H1 (cell line): ENCODE measurements at regions of chr2 and their contacts with region 1.

Region 1: GRCh38 chr2:239959059-239959971 is 65.8 kb downstream of the NDUFA10 start:
- DNase-seq: no peak
- H3K4me3 ChIP-seq: no peak overlapping the region
- H3K27ac ChIP-seq: no peak overlapping the region
- H3K4me1 ChIP-seq: no peaks in the 10 kb centered on the region
- H3K27me3 ChIP-seq: no peaks in the 10 kb centered on the region
- CTCF ChIP-seq: no peak
- EP300 ChIP-seq: no peak
- POLR2A ChIP-seq: no peak
- RAD21 ChIP-seq: no peak

Region 2: DNA sequence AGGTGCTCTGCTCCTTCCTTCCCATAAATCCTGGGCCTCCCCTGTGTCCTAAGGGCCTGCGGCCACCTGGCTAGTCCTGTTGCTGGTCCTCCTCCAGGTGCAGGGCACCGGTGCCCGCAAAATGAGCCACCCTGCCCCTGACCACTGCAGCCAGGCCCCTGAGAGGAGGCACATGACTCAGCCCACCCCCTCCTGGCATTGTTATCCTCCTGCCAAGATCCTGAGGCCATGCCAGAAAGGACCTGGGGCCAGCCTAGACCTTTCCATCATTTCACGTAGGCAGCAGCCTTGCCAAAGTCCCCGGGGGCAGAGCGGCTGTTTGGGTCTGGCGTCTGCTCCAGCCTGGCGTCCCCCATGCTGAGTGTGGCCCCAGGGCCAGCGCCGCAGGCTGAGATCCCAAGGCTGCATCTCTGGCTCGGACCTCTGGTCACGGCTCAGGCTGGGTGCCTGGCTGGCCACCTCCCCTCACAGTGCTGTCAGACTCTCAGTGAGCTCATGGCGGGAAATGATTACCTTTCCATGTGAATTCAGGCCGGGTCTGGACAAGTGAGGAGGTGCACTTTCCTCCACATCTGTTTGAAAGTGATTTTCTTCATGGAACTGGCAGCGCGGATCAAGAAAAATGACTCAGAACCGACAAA is 15.2 kb before region 1 on chr2:
- CTCF ChIA-PET with region 1: no interaction called
- POLR2A ChIA-PET with region 1: no interaction called
- DNase-seq: no peak
- H3K4me3 ChIP-seq: no peak overlapping the region
- H3K27ac ChIP-seq: no peak overlapping the region
- H3K4me1 ChIP-seq: no peaks in the 10 kb centered on the region
- H3K27me3 ChIP-seq: no peaks in the 10 kb centered on the region
- CTCF ChIP-seq: no peak
- EP300 ChIP-seq: no peak
- POLR2A ChIP-seq: no peak
- RAD21 ChIP-seq: no peak

Region 3: DNA sequence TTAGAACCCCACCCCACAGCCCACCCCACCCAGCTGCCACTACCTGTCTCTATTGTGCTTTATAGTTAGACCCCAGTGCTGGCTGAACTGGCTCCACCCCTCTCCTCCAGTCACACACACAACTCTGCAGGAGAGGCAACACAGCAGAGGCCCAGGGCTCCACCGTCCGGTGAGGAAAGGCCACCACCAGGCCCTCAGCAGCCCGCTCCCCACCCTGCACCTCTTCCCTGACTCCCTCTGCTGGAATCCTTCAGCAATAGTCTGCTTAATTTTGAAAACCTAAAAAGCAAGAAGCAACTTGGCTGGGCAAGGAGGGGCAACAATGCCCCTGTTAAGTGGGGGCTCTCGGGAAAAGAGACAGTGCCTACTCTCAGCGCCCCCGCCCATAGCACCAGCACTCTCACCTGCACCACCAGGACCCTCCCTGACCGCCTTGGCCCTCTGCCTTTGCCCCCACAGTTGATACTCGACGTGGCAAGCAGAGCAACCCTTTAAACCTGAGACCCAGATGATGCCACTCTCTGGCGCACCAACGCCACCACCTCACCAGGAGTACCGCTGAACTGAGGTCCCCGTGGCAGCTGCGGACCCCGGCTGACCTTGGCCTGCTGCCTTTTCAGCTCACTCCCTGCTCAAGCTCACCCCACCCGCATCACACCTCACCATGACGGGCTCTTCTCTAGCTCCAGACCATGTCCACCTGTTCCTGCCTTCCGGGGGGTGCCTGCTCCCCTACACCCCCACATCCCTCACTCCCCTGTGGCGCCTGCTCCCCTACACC is 20.1 kb after region 1 on chr2:
- CTCF ChIA-PET with region 1: interaction called, 41 read pairs
- POLR2A ChIA-PET with region 1: no interaction called
- DNase-seq: peak; percentile 19 to 68
- H3K4me3 ChIP-seq: no peak overlapping the region
- H3K27ac ChIP-seq: no peak overlapping the region; the same call in 1 of the 2 replicates
- H3K4me1 ChIP-seq: no peaks in the 10 kb centered on the region; a peak in 1 of 7 replicates
- H3K27me3 ChIP-seq: no peaks in the 10 kb centered on the region
- CTCF ChIP-seq: peak; percentile 71 to 97 (median 80)
- EP300 ChIP-seq: no peak
- POLR2A ChIP-seq: no peak
- RAD21 ChIP-seq: peak; percentile 68 to 73

Region 4: DNA sequence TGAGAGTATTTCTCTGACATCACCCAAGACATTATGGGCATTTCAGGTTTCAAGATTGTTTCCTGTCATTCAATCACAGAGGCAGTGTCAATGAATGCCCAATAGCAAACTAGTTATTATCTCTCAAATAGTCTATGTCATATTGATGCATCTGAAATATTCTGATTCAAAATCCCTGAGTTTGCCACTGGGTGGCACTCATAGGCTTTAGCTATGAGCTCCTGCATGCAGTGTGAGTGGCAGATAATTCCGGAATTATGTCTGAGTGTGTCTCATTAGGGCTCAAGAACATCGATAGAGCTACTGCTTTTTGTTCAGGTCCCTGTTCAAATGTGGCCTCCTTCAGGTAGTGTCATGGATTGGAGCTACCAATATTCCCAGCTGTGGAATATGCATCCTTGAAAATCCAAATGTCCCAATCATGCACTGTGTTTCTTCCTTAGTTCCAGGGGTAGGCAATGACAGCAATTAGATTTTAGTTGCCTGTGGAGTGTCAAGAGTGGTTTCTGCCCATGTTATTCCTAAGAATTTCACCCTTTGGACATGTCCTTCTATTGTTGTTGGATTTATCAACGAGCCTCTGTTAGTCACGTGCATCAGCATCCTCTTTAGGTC is 101.8 kb after region 1 on chr2:
- CTCF ChIA-PET with region 1: no interaction called
- POLR2A ChIA-PET with region 1: no interaction called
- DNase-seq: no peak
- H3K4me3 ChIP-seq: no peak overlapping the region
- H3K27ac ChIP-seq: no peak overlapping the region
- H3K4me1 ChIP-seq: no peaks in the 10 kb centered on the region; a peak in 2 of 7 replicates
- H3K27me3 ChIP-seq: no peaks in the 10 kb centered on the region
- CTCF ChIP-seq: peak in 2 of 3 experiments; percentile 58 to 63; a peak in 3 of 4 replicates
- EP300 ChIP-seq: no peak
- POLR2A ChIP-seq: no peak
- RAD21 ChIP-seq: peak; percentile 83 to 86